Caco-2 (cell line): ENCODE measurements at regions of chr1 and their contacts with region 1.

Region 1: DNA sequence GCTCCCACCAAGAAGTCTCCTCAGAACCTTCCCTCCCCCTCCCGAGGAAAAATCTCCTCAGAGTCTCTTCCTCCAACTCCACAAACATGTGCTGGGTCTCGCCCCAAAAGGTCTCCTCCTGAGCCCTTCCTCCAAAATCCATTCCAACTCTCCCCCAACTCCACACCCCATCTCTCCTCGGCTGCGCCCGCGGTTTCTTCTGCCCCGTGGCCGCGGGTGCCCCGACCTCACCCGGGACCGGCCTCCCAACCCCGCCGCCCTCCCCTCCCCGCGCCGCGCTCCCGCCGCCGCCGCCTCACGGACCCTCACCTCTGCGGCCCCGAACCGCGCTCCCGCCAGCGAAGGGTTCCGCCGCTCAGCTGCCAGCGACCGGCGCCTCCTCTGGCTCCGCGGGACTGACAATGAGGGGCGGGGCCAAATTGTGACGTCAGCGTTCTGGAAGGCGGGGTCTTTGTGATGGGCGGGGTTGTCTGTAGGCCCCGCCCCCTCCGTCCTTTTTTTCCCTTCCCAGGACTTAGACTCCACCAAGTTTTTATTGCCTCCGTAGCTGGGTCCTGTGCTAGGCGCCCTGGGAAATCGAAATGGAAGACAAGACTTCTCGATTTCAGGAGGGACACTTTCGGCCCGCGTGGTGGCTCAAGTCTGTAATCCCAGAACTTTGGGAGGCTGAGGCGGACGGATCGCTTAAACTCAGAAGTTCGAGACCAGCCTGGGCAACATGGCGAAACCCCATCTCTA is at the start of gene LUZP1:
- DNase-seq: peak; percentile 80 to 87
- H3K4me3 ChIP-seq: peak within 1 kb of the TSS; percentile 68
- H3K4me3 Mint-ChIP-seq: peak within 1 kb of the TSS; percentile 99
- H3K27ac Mint-ChIP-seq: peak within 1 kb of the TSS; percentile 97
- H3K4me1 ChIP-seq: peaks cover 4% of the 10 kb centered on the region; the same call in 1 of the 2 replicates
- H3K4me1 Mint-ChIP-seq: peaks cover 10% of the 10 kb centered on the region
- H3K27me3 ChIP-seq: no peaks in the 10 kb centered on the region
- H3K27me3 Mint-ChIP-seq: no peaks in the 10 kb centered on the region
- CTCF ChIP-seq: no peak
- total RNA-seq, gene LUZP1: 20.0 and 20.6 TPM in 2 replicates

Region 2: GRCh38 chr1:23019094-23019862 is 149.3 kb before region 1 on chr1 and contains the start of gene KDM1A:
- CTCF ChIA-PET with region 1: no interaction called
- POLR2A ChIA-PET with region 1: no interaction called
- intact Hi-C with region 1: loop called (anchors 5 kb)
- DNase-seq: peak; percentile 97 to 98
- H3K4me3 ChIP-seq: peak within 1 kb of the TSS; percentile 93
- H3K4me3 Mint-ChIP-seq: peak within 1 kb of the TSS; percentile 77
- H3K27ac Mint-ChIP-seq: peak within 1 kb of the TSS; percentile 95
- H3K4me1 ChIP-seq: no peaks in the 10 kb centered on the region
- H3K4me1 Mint-ChIP-seq: no peaks in the 10 kb centered on the region
- H3K27me3 ChIP-seq: no peaks in the 10 kb centered on the region
- H3K27me3 Mint-ChIP-seq: no peaks in the 10 kb centered on the region
- CTCF ChIP-seq: peak in 1 of 2 experiments; percentile 30
- total RNA-seq, gene KDM1A: 82.8 and 83.0 TPM in 2 replicates

Region 3: DNA sequence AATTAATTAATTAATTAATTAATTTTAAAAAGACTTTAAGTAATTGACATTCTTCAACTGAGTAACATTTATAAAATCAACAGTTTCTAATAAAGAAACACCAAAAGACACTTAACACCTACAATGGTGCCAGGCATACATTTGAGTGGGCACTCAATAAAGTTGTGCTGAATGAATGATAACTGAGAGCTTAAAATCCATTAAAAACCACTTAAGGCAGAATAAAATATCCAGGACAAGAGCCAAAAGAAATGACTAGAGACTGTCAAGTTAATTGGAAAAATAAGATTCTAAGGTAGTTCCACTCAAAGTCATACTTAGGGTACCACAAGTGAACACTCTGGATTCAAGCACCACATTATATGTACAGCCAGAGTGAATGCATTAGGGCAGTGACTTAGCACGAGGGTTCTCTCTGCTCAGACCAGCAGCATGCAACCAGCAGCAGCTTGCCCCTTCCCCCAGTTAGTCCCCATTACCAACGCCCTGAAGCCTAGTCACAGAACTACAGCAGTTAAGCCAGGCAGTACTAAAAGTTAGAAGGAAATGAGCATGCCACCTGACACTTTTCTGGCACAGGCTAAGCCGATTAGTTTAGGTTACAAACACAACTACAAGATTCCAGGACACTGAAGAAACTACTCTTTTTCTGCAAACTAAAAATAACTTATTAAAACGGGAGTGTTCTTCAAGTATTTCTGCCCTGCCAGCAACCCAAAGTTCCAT is 46.4 kb before region 1 on chr1:
- CTCF ChIA-PET with region 1: no interaction called
- POLR2A ChIA-PET with region 1: no interaction called
- intact Hi-C with region 1: loop called (anchors 5 kb)
- DNase-seq: no peak
- H3K4me3 ChIP-seq: no peak overlapping the region
- H3K4me3 Mint-ChIP-seq: no peak overlapping the region
- H3K27ac Mint-ChIP-seq: no peak overlapping the region
- H3K4me1 ChIP-seq: peaks cover 15% of the 10 kb centered on the region
- H3K4me1 Mint-ChIP-seq: no peaks in the 10 kb centered on the region
- H3K27me3 ChIP-seq: no peaks in the 10 kb centered on the region
- H3K27me3 Mint-ChIP-seq: no peaks in the 10 kb centered on the region
- CTCF ChIP-seq: no peak

Region 4: GRCh38 chr1:23184212-23184934 is 15.7 kb after region 1 on chr1:
- CTCF ChIA-PET with region 1: interaction called, 11 read pairs
- POLR2A ChIA-PET with region 1: no interaction called
- intact Hi-C with region 1: no loop called
- DNase-seq: peak in 1 of 2 experiments; percentile 45
- H3K4me3 ChIP-seq: peak overlapping the region; percentile 23
- H3K4me3 Mint-ChIP-seq: peak overlapping the region; percentile 64
- H3K27ac Mint-ChIP-seq: no peak overlapping the region
- H3K4me1 ChIP-seq: no peaks in the 10 kb centered on the region
- H3K4me1 Mint-ChIP-seq: peaks cover 7% of the 10 kb centered on the region
- H3K27me3 ChIP-seq: no peaks in the 10 kb centered on the region
- H3K27me3 Mint-ChIP-seq: no peaks in the 10 kb centered on the region
- CTCF ChIP-seq: peak; percentile 63 to 76